Kidney (tissue), 22 donors: ENCODE measurements at regions of chr17 and their contacts with region 1.

Region 1: GRCh38 chr17:78865682-78866390 is 25.2 kb upstream of the USP36 start:
- DNase-seq: peak; percentile 85 to 91 (median 86)
- H3K4me3 ChIP-seq: no peak overlapping the region
- H3K27ac ChIP-seq: no peak overlapping the region
- H3K4me1 ChIP-seq: no peaks in the 10 kb centered on the region
- H3K27me3 ChIP-seq: no peaks in the 10 kb centered on the region
- CTCF ChIP-seq: peak; percentile 92

Region 2: DNA sequence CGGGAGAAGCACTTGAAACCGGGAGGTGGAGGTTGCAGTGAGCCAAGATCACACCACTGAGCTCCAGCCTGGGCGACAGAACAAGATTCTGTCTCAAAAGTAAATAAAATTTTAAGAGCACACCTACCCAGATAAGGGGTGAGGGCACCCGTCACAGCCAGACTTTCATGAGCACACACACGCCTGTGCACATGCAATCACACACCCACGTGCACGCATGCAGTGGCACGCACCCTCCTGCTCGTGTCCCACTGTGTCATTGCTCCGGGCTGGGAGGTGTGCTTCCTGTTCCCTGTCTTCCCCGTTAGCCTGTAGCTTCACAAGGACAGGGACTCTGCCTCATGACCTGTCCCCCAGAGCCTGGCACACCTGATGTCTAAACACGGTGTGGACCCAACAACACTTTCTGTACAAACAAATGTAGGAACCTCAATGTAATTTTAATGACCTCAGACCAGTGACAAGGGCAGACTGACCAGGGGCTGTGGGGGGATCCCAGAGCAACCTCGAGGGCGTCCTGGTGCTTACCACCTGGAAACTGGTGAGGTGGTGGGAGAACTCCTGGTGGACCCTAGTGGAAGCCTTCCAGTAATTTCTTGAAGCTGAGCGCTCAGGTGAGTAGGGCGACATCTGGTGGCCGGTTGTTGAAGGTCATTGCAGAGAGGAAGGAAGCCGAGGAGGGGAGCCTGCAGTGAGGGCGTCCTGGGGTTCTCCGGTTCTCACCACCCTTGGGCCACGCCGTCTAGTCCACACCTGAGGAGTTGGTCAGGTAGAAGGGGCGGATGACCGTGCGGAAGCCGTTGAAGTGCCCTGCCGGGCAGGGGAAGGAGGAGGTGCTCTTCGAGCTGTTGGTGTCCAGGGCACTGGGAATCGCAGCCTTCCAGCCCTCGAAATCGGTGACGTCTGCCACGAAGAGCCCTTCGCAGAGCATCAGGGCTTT is 105.3 kb after region 1 on chr17:
- intact Hi-C with region 1: loop called (anchors 5 kb)
- DNase-seq: peak; percentile 84 to 92 (median 88)
- H3K4me3 ChIP-seq: no peak overlapping the region
- H3K27ac ChIP-seq: peak overlapping the region in 1 of 2 donors; percentile 65
- H3K4me1 ChIP-seq: peaks cover 0 to 22% (median 9%) of the 10 kb centered on the region in 3 donors
- H3K27me3 ChIP-seq: no peaks in the 10 kb centered on the region
- CTCF ChIP-seq: peak; percentile 91